Heart left ventricle (tissue), 16 donors: ENCODE measurements at regions of chr5 and their contacts with region 1.

Region 1: GRCh38 chr5:168209244-168209995 is 82.0 kb upstream of the WWC1 start:
- DNase-seq: no peak
- ATAC-seq: peak in 3 of 4 donors; percentile 23 to 57 (median 36)
- H3K4me3 ChIP-seq: no peak overlapping the region
- H3K27ac ChIP-seq: peak overlapping the region in 6 of 12 donors; percentile 9 to 50 (median 40)
- H3K4me1 ChIP-seq: peaks cover 0 to 22% (median 4%) of the 10 kb centered on the region in 12 donors
- H3K27me3 ChIP-seq: no peaks in the 10 kb centered on the region
- CTCF ChIP-seq: no peak
- POLR2A ChIP-seq: no peak

Region 2: DNA sequence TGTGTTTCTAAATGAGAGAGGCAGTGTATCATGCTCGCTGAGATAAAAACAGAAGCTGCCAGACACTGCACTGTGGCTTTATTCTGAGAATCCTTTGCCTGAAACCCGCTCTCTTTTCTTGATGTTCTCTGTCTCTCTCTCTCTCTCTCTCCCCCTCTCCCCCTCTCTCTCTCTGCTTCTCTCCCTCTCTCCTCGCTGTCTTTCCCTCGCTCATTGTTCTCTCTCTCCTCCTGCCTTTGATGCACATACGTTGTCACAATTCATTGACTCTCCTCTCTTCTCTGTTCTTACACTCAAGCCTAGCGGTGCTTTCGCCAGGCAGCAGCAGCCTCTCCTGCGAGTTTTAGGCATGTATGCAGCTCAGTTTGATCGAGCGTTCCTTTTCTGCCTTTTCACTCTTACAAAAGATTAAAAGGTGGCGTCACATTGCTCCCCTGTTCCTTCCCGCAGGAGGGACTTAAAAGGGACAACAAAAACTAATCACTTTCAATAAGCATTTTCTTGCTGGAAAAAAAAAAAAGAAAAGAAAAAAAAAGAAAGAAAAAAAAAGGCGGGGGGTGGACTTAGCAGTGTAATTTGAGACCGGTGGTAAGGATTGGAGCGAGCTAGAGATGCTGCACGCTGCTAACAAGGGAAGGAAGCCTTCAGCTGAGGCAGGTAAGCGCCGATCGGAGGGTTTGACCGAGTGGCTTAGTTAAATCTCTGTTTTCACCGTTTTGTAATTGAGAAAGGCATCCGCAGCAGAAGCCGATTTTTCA is 635.9 kb before region 1 on chr5:
- intact Hi-C with region 1: loop called in 2 of 10 experiments (anchors 10 kb)
- DNase-seq: no peak
- ATAC-seq: peak in 2 of 4 donors; percentile 30 to 43
- H3K4me3 ChIP-seq: peak overlapping the region in 9 of 12 donors; percentile 3 to 41 (median 32)
- H3K27ac ChIP-seq: no peak overlapping the region
- H3K4me1 ChIP-seq: peaks cover 0 to 11% (median 0%) of the 10 kb centered on the region in 12 donors
- H3K27me3 ChIP-seq: peaks cover 3 to 79% (median 31%) of the 10 kb centered on the region in 9 donors
- CTCF ChIP-seq: no peak
- POLR2A ChIP-seq: no peak

Region 3: GRCh38 chr5:168227973-168228615 is 18.7 kb after region 1 on chr5:
- intact Hi-C with region 1: loop called in 1 of 10 experiments (anchors 1 kb)
- DNase-seq: no peak
- ATAC-seq: no peak
- H3K4me3 ChIP-seq: no peak overlapping the region
- H3K27ac ChIP-seq: peak overlapping the region in 2 of 12 donors; percentile 50 to 82
- H3K4me1 ChIP-seq: peaks cover 0 to 44% (median 20%) of the 10 kb centered on the region in 12 donors
- H3K27me3 ChIP-seq: no peaks in the 10 kb centered on the region
- CTCF ChIP-seq: no peak
- POLR2A ChIP-seq: no peak

Region 4: DNA sequence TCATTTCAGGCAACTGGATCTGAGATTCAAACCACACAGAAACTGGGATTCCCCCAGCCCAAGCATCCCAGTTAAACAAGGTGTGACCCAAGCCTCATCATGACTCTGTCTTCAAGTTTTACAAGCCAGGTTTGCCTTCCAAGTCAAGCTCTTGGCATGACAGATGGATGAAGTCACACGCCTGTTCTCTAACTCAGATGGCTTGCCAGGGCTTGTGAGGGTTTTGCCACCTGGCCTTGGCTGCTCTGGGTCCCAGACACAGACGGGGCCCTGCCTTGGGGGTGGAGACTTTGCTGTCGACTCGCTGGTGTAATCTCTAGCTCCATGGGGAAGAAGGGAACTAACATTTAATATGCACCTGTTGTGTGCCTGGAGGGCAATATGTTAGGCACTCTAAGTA is 181.1 kb after region 1 on chr5:
- intact Hi-C with region 1: no loop called
- DNase-seq: no peak
- ATAC-seq: no peak
- H3K4me3 ChIP-seq: no peak overlapping the region
- H3K27ac ChIP-seq: no peak overlapping the region
- H3K4me1 ChIP-seq: no peaks in the 10 kb centered on the region
- H3K27me3 ChIP-seq: peaks cover 0 to 3% (median 0%) of the 10 kb centered on the region in 9 donors
- CTCF ChIP-seq: no peak
- POLR2A ChIP-seq: no peak